Panc1 (cell line): ENCODE measurements at regions of chr17 and their contacts with region 1.

Region 1: GRCh38 chr17:75827252-75828115 is 16.7 kb downstream of the UNC13D start:
- DNase-seq: no peak
- ATAC-seq: peak; percentile 60
- H3K4me3 ChIP-seq: no peak overlapping the region
- H3K27ac ChIP-seq: no peak overlapping the region
- H3K4me1 ChIP-seq: no peaks in the 10 kb centered on the region; the same call in 1 of the 2 replicates
- H3K27me3 ChIP-seq: no peaks in the 10 kb centered on the region
- CTCF ChIP-seq: peak; percentile 87

Region 2: DNA sequence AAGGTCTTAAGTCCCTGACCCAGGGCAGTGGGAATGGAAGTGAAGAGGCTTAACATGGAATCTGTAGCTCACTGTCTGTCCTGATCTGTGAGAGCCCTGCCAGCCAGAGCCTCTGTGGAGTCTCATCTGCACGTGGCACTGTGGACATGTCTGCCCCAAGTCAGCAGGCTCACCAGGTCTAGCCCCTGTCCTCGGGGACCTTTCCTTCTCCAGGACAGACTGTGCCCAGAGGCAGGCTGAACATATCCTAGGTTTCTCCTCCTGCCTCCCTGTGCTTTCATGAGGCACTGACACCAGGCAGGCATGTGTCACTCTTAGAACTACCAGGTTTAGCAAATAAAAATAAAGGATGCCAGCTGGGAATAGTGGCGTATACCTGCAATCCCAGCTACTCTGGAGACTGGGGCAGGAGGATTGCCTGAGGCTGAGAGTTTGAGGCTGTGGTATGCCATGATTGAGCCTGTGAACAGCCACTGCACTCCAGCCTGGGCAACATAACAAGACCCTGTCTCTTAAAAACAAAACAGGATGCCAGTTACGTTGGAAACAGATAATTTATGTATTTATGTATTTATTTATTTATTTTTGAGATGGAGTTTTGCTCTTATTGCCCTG is 20.5 kb before region 1 on chr17:
- CTCF ChIA-PET with region 1: interaction called, 3 read pairs
- POLR2A ChIA-PET with region 1: interaction called, 14 read pairs
- in situ Hi-C with region 1: no loop called
- intact Hi-C with region 1: no loop called
- DNase-seq: no peak
- ATAC-seq: 0 out of 2 replicates have a peak, but pooled peaks have one; percentile 21
- H3K4me3 ChIP-seq: no peak overlapping the region
- H3K27ac ChIP-seq: no peak overlapping the region
- H3K4me1 ChIP-seq: no peaks in the 10 kb centered on the region
- H3K27me3 ChIP-seq: no peaks in the 10 kb centered on the region
- CTCF ChIP-seq: no peak

Region 3: DNA sequence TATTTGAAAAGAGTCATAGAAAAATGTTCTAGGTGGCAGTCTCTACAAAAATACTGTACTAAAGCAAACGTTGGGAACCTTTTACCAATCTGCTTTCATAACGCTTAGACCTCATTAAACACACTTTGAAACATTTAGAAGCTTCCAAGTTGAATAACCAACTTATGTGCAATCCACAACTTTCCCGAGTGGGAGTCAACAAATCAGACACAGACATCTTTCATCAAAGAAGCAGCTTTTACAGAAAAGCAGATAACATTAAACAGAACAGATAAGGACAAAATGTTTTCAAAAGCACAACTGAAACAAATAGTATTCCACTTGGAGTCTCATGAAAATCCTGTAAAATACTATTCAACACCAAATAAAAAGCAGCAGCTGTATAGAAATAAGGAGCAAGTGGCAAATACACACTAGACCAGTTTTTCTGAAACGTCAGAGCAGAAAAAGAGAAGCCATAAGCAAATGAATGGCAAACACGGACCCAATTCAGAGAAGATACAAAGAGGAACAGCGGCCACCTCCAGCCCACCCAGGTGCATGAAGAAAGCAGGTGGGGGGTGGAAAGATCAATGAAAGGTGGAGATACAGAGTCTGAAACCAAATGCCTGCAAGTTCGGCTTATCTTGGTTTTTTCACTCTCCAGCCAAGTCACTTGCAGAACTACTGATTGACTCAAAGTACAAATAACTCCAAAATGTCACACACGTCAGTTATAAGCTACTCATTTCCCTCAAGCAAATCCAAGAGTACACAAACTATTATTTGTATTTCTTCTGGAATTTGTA is 131.8 kb after region 1 on chr17:
- CTCF ChIA-PET with region 1: no interaction called
- POLR2A ChIA-PET with region 1: no interaction called
- in situ Hi-C with region 1: no loop called
- intact Hi-C with region 1: no loop called
- DNase-seq: no peak
- ATAC-seq: 0 out of 2 replicates have a peak, but pooled peaks have one; percentile 21
- H3K4me3 ChIP-seq: no peak overlapping the region
- H3K27ac ChIP-seq: no peak overlapping the region
- H3K4me1 ChIP-seq: no peaks in the 10 kb centered on the region; the same call in 1 of the 2 replicates
- H3K27me3 ChIP-seq: no peaks in the 10 kb centered on the region
- CTCF ChIP-seq: no peak

Region 4: DNA sequence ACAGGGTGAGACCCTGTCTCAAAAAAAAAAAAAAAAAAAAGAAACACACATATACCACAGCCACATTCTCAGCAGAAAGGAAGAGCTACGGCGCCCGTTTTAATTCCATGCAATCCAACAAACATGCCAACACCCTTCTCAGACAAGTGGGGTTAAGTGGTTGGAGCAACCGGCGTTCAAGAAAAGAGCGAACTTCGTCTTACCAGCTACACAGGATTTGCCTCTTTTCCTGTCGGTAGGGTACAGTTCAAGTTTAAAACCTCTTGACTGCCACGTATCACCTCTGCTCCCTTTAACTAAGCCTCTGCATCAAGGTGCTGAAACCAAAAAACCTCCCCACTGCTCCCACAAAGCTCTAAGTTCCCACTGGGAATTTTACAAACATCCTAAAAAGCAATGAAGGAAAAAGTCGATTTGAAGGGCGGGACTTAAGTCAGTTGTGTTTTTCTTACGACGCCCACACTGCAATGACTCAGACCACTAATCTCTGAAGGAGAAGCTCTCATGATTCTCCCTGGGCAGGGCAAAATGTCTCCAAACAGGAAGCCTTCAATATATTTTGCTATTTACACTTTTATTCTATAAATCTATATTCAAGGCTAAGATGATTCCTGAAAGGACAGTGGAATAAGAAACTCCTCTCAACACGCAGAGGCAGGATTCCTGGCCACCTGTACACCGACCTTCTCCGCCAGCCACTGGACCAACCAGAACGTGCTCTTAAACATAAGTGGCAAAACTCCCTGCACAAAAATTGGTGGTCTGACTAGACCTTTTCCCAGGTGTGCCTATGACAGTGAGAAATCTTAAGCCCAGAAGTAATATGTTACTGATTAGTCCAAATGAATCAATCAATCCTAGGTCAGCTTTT is 226.0 kb after region 1 on chr17:
- CTCF ChIA-PET with region 1: no interaction called
- POLR2A ChIA-PET with region 1: no interaction called
- in situ Hi-C with region 1: no loop called
- intact Hi-C with region 1: no loop called
- DNase-seq: no peak
- ATAC-seq: no peak
- H3K4me3 ChIP-seq: no peak overlapping the region
- H3K27ac ChIP-seq: no peak overlapping the region
- H3K4me1 ChIP-seq: no peaks in the 10 kb centered on the region
- H3K27me3 ChIP-seq: no peaks in the 10 kb centered on the region
- CTCF ChIP-seq: no peak